Activated CD4-positive, alpha-beta T cell treated with anti-CD3 and anti-CD28 coated beads, Interleukin-2, amount 10 ng/mL, durations not matched to agents 24 days and 14 days (primary cell): ENCODE measurements at regions of chr4 and their contacts with region 1.

Region 1: GRCh38 chr4:153488006-153488891 is 22.1 kb downstream of the TMEM131L start:
- DNase-seq: peak; percentile 89
- H3K4me3 Mint-ChIP-seq: peak overlapping the region; percentile 82
- H3K27ac Mint-ChIP-seq: peak overlapping the region; percentile 96
- H3K4me1 Mint-ChIP-seq: peaks cover 70% of the 10 kb centered on the region
- H3K27me3 Mint-ChIP-seq: no peaks in the 10 kb centered on the region

Region 2: DNA sequence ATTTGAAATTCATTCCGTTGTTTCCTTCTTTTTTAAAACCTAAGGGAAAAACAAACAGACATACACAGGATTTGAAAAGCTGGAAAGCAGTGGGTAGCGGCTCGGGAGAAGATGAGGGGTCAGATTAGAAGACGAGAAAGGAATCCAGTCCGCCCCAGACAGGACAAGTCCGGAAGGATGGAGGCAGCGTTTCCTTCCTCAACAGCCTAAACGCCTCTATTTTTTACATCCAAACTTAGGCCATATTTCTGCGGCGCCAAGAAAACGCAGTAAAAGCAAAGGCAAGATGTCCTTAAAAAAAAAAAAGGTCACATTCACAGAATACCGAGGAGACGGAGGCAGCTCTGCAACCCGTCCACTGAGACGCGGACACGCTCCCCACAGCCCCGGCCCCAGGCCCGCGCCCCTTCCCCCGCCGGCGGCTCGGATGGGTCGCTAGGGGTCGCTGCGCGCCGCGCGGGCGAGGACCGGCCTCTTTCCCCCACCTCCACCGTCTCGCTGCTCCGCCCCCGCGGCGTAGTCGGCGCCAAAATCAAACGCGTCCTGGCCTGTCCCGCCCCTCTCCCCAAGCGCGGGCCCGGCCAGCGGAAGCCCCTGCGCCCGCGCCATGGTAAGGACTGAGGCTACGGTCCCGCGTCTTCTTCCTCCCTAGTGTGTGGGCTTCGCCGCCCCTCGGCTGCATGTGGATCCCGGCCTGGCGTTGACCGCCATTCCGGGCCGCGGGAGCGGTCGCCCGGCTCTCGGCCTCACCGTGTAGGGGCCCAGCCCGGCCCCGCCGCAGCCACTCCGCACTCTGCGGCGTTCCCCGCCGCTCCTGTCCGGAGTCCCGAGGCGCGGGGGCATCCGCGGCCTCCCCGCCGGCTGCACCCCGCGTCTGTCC is 143.9 kb before region 1 on chr4 and contains the start of gene MND1:
- intact Hi-C with region 1: loop called (anchors 1 kb)
- DNase-seq: peak; percentile 98
- H3K4me3 Mint-ChIP-seq: peak within 1 kb of the TSS; percentile 93
- H3K27ac Mint-ChIP-seq: peak within 1 kb of the TSS; percentile 90
- H3K4me1 Mint-ChIP-seq: peaks cover 46% of the 10 kb centered on the region
- H3K27me3 Mint-ChIP-seq: peaks cover 10% of the 10 kb centered on the region
- total RNA-seq, gene MND1: 15.0 and 18.8 TPM in 2 replicates

Region 3: DNA sequence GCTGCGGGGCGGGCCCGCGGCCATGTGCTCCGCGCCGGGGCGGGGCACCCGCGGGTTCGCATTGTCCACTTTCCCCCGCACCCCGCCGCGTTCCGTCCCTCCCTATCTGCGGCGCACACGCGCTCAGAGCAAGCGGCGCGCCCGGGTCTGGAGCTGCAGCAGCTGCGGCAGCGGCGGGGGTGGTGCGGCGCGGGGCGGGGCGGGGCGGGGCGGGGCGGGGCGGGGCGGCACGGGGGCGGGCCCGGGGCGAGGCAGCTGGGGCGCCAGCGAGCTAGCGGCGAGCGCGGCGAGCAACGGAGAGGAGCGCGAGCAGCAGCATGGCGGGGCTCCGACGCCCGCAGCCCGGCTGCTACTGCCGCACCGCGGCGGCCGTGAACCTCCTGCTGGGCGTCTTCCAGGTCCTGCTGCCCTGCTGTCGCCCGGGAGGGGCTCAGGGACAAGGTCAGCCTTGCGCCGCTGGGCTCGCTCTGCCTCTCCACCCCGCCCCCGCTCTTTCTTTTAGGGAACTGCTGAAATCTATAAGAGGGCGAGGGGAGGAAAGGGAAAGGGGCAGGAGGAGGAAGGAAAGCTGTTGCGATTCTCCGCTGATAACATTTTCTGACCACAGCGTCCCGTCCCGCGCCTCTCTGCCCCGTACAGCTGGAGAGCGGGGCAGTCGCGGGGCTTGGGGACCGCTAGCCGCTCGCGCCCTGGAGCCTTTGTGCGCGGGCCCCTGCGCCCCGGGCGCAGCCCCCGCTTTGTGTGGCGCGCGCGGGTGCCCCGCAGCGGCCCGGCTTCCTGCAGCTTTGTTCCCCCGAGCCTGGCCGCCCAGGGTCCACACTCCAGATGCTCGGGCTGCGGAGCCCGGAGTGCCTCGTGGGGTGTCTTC is 21.9 kb before region 1 on chr4 and contains the start of gene TMEM131L:
- intact Hi-C with region 1: loop called (anchors 1 kb)
- DNase-seq: peak; percentile 90
- H3K4me3 Mint-ChIP-seq: peak within 1 kb of the TSS; percentile 85
- H3K27ac Mint-ChIP-seq: peak within 1 kb of the TSS; percentile 93
- H3K4me1 Mint-ChIP-seq: peaks cover 47% of the 10 kb centered on the region
- H3K27me3 Mint-ChIP-seq: no peaks in the 10 kb centered on the region
- total RNA-seq, gene TMEM131L: 40.3 and 40.6 TPM in 2 replicates

Region 4: DNA sequence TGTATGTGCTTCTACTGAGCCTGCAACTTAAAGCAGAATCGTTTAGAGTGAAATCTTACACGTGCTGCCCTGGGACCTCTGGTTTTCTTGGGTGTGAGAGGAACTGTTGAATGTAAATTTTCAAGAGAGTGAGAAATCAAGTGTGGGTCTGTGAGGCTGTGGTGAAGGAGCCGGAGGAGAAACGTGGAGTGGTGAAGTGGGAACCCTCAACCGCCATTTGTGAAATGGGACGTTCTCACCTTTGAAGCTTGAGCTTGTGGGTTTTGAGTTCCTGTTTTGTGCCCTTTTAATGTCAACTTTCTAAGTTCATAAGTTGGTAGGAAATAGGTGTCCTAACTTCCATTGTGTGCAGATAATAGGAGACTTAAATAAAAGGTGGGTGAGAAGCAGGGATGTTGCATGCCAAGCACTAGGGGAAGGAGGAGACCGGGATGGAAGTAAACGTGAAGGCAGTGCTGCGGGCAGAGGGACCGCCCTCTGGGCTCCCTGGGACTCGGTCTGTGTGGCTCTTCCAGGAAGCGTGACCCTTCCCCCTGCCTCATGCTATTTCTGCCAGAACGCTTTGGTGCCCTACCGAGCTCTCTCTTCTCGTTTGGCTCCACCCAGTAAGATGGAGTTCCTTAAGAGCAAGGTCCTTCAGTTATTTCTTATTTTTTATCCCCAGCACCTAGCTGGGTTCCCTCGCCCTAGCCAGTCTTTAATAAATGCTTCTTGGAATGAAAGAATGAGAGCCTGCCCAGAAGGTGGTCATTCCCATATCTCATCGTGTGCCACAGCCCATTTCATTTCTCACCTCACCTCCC is 34.0 kb after region 1 on chr4:
- intact Hi-C with region 1: loop called (anchors 1 kb)
- DNase-seq: peak; percentile 87
- H3K4me3 Mint-ChIP-seq: peak overlapping the region; percentile 75
- H3K27ac Mint-ChIP-seq: peak overlapping the region; percentile 95
- H3K4me1 Mint-ChIP-seq: peaks cover 83% of the 10 kb centered on the region
- H3K27me3 Mint-ChIP-seq: no peaks in the 10 kb centered on the region

Region 5: DNA sequence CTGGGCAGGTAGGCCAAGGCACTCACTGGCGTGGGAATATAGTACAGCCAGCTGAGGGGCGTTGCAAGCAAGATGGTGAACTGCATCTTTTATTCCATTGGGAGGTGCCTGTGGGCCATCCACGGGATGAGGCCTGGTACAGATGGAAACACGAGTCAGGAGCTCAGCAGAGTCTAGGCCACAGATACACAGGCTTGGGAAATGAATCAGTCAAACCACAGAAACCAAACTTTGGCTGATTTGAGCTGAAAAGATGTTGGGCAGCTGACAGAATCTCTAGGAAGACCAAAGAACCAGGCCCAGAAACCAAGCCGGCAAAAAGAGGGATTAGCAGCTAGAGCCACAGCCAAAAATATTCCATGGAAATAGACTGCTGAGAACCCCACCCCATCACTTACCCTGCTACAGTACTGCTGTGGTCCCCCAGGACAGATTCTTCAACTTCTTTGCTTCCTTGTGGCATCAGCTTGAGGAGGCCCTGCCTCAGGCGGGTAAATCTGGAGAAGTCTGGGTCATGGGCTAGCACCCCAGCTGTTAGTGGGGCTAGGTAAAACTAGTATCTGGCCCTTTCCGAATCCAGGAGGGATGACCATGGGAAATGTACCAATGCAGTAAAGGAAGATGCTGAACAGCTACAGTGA is 53.3 kb after region 1 on chr4:
- intact Hi-C with region 1: loop called (anchors 2 kb)
- DNase-seq: peak; percentile 73
- H3K4me3 Mint-ChIP-seq: no peak overlapping the region
- H3K27ac Mint-ChIP-seq: peak overlapping the region; percentile 17
- H3K4me1 Mint-ChIP-seq: peaks cover 39% of the 10 kb centered on the region
- H3K27me3 Mint-ChIP-seq: no peaks in the 10 kb centered on the region

Region 6: DNA sequence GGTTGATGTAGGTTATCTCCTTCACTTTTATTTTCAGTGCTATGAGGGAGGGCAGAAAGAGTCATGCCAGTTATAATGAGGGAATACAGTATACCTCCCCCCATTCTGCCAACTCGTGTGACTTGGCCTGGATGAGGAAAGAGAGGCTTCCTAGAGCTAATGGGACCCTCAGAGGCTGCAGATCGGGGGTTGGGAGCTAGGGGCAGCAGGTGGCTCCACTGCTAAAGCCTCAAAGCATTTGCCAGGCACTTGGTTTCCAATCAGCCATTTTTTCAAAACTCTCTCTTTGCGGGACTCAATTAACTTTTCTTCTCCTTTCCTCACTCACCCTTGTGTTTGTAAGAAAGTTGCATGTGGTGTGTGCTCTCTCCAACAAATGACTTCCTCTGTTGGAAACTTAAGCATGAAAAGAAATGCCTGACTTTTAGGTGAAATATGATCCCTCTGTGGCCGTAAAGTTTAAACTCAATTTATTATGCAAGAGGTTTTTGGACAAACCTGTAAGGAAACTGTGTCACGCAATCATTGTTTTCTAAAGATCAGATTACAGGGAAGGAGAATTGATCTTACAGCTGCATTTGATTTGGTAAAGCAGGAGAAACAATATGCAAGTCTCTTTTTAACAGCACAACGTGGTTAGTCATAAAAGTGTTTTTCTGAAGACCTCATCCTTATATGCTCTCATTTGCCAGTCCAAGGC is 293.6 kb after region 1 on chr4:
- intact Hi-C with region 1: no loop called
- DNase-seq: peak; percentile 22
- H3K4me3 Mint-ChIP-seq: no peak overlapping the region
- H3K27ac Mint-ChIP-seq: no peak overlapping the region
- H3K4me1 Mint-ChIP-seq: no peaks in the 10 kb centered on the region
- H3K27me3 Mint-ChIP-seq: peaks cover 69% of the 10 kb centered on the region